ENCODE measurements at regions of chr5 and their contacts with region 1.

Region 1: GRCh38 chr5:159156426-159157238 is 52.7 kb downstream of the RNF145 start:
- DNase-seq: peak in 1 of 5 donors; percentile 40
- ATAC-seq: peak; percentile 59 to 84 (median 78)
- H3K4me3 ChIP-seq: no peak overlapping the region
- H3K27ac ChIP-seq: peak overlapping the region in 1 of 12 donors; percentile 23
- H3K4me1 ChIP-seq: peaks cover 0 to 7% (median 0%) of the 10 kb centered on the region in 12 donors
- H3K27me3 ChIP-seq: no peaks in the 10 kb centered on the region
- CTCF ChIP-seq: peak; percentile 77 to 95 (median 89)
- POLR2A ChIP-seq: no peak

Region 2: GRCh38 chr5:159262859-159263567 is 106.4 kb after region 1 on chr5 and contains the start of gene UBLCP1:
- intact Hi-C with region 1: loop called (anchors 2 to 5 kb)
- DNase-seq: peak; percentile 81 to 89 (median 83)
- ATAC-seq: peak; percentile 90 to 96 (median 95)
- H3K4me3 ChIP-seq: peak within 1 kb of the TSS; percentile 59 to 98 (median 90)
- H3K27ac ChIP-seq: peak within 1 kb of the TSS; percentile 79 to 97 (median 90)
- H3K4me1 ChIP-seq: peaks cover 0 to 24% (median 14%) of the 10 kb centered on the region in 12 donors
- H3K27me3 ChIP-seq: no peaks in the 10 kb centered on the region
- CTCF ChIP-seq: peak in 1 of 12 donors; percentile 15
- POLR2A ChIP-seq: peak in 1 of 2 donors; percentile 50
- total RNA-seq, gene UBLCP1: 11.9 to 20.4 (median 14.4) TPM

Region 3: DNA sequence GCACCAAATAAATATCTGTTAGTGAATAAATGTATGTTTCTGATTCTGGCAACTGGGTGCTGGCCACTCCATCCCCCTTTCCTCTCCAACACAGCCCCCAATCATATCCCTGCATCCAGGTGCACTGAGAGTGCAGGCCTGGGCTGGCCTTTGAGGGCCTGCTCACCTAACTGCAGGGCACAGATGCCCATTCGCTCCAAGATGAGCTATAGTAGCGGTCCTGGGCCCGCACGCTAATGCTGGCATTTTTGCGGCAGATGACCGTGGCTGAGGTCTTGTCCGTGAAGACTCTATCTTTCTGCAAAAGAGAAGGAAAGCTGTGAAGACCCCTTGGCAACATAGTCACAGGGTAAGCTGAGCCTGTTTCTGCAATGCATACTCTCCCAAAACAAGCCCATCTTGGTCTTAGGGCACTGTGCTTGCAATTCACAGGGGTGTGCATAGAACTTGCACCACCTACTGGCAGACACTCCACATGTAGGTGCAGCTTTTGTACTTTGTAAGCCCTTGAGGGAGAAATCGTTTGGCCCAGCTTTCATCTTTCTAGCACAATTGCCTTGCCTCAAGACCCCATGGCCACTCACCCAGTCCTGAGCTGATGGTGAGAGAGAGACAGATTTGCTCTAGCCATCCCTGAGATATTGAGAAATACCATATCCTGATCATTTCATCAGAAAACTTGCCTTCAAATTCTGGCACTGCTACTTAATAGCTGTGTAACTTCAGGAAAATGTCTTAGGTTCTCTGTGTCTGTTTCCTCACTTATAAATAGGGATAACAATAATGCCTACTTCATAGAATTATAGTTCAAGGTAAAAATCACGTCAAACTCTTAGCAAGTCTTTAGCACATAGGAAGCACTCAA is 160.1 kb after region 1 on chr5:
- intact Hi-C with region 1: loop called in 7 of 10 experiments (anchors 1 to 10 kb)
- DNase-seq: peak in 2 of 5 donors; percentile 20 to 31
- ATAC-seq: peak; percentile 51 to 66 (median 58)
- H3K4me3 ChIP-seq: no peak overlapping the region
- H3K27ac ChIP-seq: no peak overlapping the region
- H3K4me1 ChIP-seq: no peaks in the 10 kb centered on the region
- H3K27me3 ChIP-seq: peaks cover 0 to 21% (median 0%) of the 10 kb centered on the region in 9 donors
- CTCF ChIP-seq: peak; percentile 26 to 63 (median 46)
- POLR2A ChIP-seq: no peak

Region 4: GRCh38 chr5:159430361-159431012 is 273.9 kb after region 1 on chr5:
- intact Hi-C with region 1: loop called in 1 of 10 experiments (anchors 10 kb)
- DNase-seq: no peak
- ATAC-seq: no peak
- H3K4me3 ChIP-seq: no peak overlapping the region
- H3K27ac ChIP-seq: no peak overlapping the region
- H3K4me1 ChIP-seq: peaks cover 0 to 4% (median 0%) of the 10 kb centered on the region in 12 donors
- H3K27me3 ChIP-seq: no peaks in the 10 kb centered on the region
- CTCF ChIP-seq: no peak
- POLR2A ChIP-seq: no peak

Region 5: GRCh38 chr5:159601216-159601615 is 444.6 kb after region 1 on chr5:
- intact Hi-C with region 1: no loop called
- DNase-seq: no peak
- ATAC-seq: no peak
- H3K4me3 ChIP-seq: no peak overlapping the region
- H3K27ac ChIP-seq: no peak overlapping the region
- H3K4me1 ChIP-seq: peaks cover 0 to 18% (median 7%) of the 10 kb centered on the region in 12 donors
- H3K27me3 ChIP-seq: no peaks in the 10 kb centered on the region
- CTCF ChIP-seq: no peak
- POLR2A ChIP-seq: no peak